Activated naive CD4-positive, alpha-beta T cell treated with anti-CD3 and anti-CD28 coated beads for 36 hours (primary cell): ENCODE measurements at regions of chr10 and their contacts with region 1.

Region 1: DNA sequence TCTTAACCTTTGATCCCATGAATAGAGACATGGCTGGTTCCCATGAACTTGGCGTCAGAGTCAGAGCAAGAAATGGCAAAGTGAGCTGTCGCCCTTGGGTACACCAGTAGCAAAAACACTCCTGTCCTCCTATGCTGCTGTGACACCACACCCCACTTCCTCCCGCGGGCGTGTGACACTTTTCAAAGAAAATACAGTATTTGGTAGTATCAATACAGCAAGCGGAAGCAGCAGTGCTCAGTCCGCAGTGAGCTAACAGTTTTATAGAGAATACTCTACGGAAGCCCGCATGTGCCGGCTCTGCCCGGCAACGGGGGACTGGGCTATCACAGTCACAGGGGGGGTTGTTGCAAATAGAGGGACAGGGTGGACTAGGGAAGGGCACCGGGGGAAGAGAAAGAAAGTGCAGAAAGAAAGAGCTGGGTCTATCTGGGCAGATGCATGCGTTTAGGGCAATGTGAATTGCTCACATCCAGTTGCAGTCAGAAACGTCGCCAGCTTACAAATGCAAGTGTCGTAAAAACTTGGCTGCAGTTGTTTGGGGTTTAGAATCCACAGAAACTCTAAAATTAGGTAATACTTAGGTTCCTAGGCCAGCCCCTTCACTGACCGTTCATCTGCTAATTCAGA is 49.8 kb downstream of the PRKCQ start:
- DNase-seq: peak; percentile 92
- H3K4me3 Mint-ChIP-seq: peak overlapping the region; percentile 78
- H3K27ac Mint-ChIP-seq: peak overlapping the region; percentile 90
- H3K4me1 Mint-ChIP-seq: peaks cover 80% of the 10 kb centered on the region
- H3K27me3 Mint-ChIP-seq: no peaks in the 10 kb centered on the region

Region 2: DNA sequence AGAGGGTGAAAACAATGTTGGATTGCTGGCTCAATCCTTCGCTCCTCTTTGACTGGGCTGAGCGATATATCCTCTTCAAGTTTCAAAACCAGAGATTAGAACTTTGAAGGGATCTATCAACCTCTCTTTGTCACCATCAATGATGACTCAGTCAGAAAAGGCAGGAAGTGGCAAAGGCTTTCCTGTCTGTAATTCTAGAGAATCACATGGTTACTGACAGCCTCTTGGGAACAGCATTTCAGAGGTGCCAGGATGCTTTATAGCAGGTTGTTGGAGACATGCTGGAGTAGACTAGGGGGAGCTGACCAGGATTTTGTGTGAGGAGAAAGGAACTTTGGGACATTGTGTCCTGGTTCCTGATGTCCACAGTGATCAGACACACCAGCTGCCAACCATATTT is 31.6 kb before region 1 on chr10:
- CTCF ChIA-PET with region 1: no interaction called
- intact Hi-C with region 1: loop called (anchors 1 kb)
- DNase-seq: peak; percentile 67
- H3K4me3 Mint-ChIP-seq: peak overlapping the region; percentile 20
- H3K27ac Mint-ChIP-seq: peak overlapping the region; percentile 85
- H3K4me1 Mint-ChIP-seq: peaks cover 47% of the 10 kb centered on the region
- H3K27me3 Mint-ChIP-seq: no peaks in the 10 kb centered on the region

Region 3: DNA sequence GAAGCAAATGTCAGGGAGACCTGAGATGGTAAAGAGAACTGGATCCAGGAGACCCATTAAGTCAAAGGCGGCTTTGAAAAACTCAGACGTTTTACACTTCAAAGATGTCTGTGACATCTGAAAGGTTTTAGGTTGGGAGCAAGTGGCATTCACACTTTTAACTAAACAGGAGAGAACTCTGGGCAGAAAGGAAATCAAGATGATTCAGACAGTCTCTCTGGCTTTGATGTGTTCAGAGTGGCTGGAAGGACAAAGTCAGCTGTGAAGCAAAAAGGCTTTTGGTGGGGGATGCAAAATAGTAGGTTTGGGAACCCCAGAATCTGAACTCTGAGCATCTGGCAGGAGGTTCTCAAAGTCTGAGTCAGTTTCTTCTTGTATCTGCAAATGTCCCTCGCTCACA is 16.9 kb before region 1 on chr10:
- CTCF ChIA-PET with region 1: interaction called, 3 read pairs
- intact Hi-C with region 1: loop called (anchors 2 kb)
- DNase-seq: peak; percentile 64
- H3K4me3 Mint-ChIP-seq: peak overlapping the region; percentile 19
- H3K27ac Mint-ChIP-seq: peak overlapping the region; percentile 54
- H3K4me1 Mint-ChIP-seq: peaks cover 72% of the 10 kb centered on the region
- H3K27me3 Mint-ChIP-seq: no peaks in the 10 kb centered on the region

Region 4: GRCh38 chr10:6563075-6563474 is 32.7 kb after region 1 on chr10:
- CTCF ChIA-PET with region 1: interaction called, 5 read pairs
- intact Hi-C with region 1: loop called (anchors 1 kb)
- DNase-seq: peak; percentile 84
- H3K4me3 Mint-ChIP-seq: peak overlapping the region; percentile 61
- H3K27ac Mint-ChIP-seq: peak overlapping the region; percentile 82
- H3K4me1 Mint-ChIP-seq: peaks cover 85% of the 10 kb centered on the region
- H3K27me3 Mint-ChIP-seq: no peaks in the 10 kb centered on the region